ENCODE measurements at regions of chr16 and their contacts with region 1.

Region 1: GRCh38 chr16:3282730-3283524 is at the start of gene ZNF263:
- DNase-seq: peak; percentile 89
- ATAC-seq: peak; percentile 87
- H3K4me3 Mint-ChIP-seq: peak within 1 kb of the TSS; percentile 95
- H3K27ac Mint-ChIP-seq: peak within 1 kb of the TSS; percentile 99
- H3K4me1 Mint-ChIP-seq: peaks cover 40% of the 10 kb centered on the region
- H3K27me3 Mint-ChIP-seq: no peaks in the 10 kb centered on the region
- CTCF ChIP-seq: no peak
- total RNA-seq, gene ZNF263: 42.7 and 42.9 TPM in 2 replicates

Region 2: DNA sequence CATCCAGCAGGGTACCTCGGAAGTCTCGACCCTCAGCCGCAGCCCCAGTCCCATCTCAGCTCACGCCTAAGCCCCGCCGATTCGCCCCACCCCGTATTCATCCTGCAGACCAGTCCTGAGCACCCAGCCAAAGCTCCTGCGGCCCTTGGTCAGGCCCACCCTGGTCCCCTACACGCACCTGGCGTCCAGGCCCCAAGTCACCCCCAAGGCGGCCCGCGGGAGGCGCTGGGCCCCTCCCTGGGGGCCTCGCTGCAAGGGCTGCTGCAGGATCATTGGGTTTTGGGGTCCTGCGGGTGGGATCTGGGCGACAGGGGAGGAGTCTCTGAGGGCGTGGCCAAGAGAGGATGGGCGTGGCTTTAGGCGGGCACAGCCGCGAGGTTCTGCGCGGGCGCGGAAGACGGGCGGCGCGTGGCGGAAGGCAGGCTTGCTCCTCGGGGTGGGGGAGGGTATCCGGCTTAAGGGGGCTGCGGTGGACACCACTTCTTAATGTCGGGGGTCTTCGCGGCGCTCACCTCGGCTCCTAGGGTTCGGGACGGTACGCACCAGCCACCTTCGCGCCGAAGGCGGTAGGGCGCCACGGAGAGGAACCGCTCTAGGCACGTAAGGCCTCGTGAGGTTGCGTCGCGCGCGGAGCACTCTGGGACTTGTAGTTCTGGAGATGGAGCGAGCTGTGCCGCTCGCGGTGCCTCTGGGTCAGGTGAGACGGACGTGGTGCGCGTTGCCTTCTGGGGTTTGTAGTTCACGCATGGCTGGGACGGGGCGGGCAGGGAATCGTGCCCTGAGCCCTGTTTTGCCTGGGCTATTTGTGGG is 259.1 kb before region 1 on chr16 and contains the starts of genes HCFC1R1 and THOC6:
- CTCF ChIA-PET with region 1: no interaction called
- POLR2A ChIA-PET with region 1: interaction called, 8 read pairs
- intact Hi-C with region 1: loop called (anchors 1 kb)
- DNase-seq: peak; percentile 93
- ATAC-seq: peak; percentile 76
- H3K4me3 Mint-ChIP-seq: peak within 1 kb of the TSS; percentile 92
- H3K27ac Mint-ChIP-seq: peak within 1 kb of the TSS; percentile 99
- H3K4me1 Mint-ChIP-seq: peaks cover 45% of the 10 kb centered on the region
- H3K27me3 Mint-ChIP-seq: peaks cover 1% of the 10 kb centered on the region
- CTCF ChIP-seq: no peak
- total RNA-seq, gene HCFC1R1: 17.7 and 20.4 TPM in 2 replicates
- total RNA-seq, gene THOC6: 45.8 and 47.1 TPM in 2 replicates

Region 3: GRCh38 chr16:3234543-3235541 is 48.1 kb before region 1 on chr16 and contains the start of gene ZNF200:
- CTCF ChIA-PET with region 1: no interaction called
- POLR2A ChIA-PET with region 1: interaction called, 22 read pairs
- intact Hi-C with region 1: loop called (anchors 1 kb)
- DNase-seq: peak; percentile 88
- ATAC-seq: peak; percentile 91
- H3K4me3 Mint-ChIP-seq: peak within 1 kb of the TSS; percentile 94
- H3K27ac Mint-ChIP-seq: peak within 1 kb of the TSS; percentile 96
- H3K4me1 Mint-ChIP-seq: peaks cover 24% of the 10 kb centered on the region
- H3K27me3 Mint-ChIP-seq: no peaks in the 10 kb centered on the region
- CTCF ChIP-seq: no peak
- total RNA-seq, gene ZNF200: 13.6 and 15.1 TPM in 2 replicates

Region 4: GRCh38 chr16:3305109-3306068 is 22.5 kb after region 1 on chr16 and contains the starts of genes TIGD7 and ZNF75A:
- CTCF ChIA-PET with region 1: no interaction called
- POLR2A ChIA-PET with region 1: interaction called, 57 read pairs
- intact Hi-C with region 1: loop called (anchors 1 kb)
- DNase-seq: peak; percentile 83
- ATAC-seq: peak; percentile 91
- H3K4me3 Mint-ChIP-seq: peak within 1 kb of the TSS; percentile 88
- H3K27ac Mint-ChIP-seq: peak within 1 kb of the TSS; percentile 88
- H3K4me1 Mint-ChIP-seq: peaks cover 26% of the 10 kb centered on the region
- H3K27me3 Mint-ChIP-seq: no peaks in the 10 kb centered on the region
- CTCF ChIP-seq: no peak
- total RNA-seq, gene TIGD7: 6.7 and 11.0 TPM in 2 replicates
- total RNA-seq, gene ZNF75A: 84.0 and 97.9 TPM in 2 replicates

Region 5: DNA sequence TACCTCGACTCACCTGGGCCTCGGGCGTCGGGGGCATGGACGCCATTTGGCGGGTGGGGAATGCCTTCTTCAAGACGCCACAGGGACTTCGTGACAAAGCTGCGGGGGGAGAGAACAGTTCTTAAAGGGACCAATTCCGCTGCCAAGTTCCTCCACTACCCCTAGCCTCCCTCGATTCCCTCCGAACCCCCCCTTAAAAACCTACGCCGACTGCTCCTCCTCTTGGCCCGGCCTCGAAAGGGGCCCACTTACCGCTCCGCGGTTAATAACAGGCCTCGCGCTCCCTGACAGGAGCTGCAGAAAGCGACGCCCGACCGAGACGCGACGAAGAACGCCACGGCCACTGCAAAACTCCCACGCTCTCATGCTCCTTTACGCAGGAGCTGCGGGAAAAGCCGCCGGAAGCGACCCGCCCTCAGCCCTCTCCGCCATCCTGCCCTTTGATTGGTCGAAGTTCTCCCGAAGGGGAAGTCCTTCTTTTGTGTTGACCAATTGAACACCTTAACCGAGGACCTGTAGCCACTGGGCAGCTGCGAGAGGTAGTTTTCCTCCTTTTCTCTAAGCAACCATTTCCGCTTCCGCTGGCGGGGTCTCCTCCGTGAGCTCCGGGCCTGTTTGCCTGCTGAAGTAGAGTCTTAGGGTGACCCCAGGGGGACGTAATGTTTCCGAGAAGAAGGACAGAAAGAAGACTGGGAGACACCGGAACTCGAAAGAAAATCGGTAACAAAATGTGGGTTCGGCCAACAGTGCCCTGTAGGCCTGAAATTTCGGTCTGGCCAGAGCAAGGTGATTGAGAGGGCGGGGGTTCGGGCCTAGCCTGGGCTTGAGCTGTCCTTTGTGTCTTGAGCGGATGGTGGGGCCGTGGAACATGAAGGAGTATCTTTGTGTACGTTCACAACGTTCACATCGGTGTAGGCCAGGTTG is 160.4 kb after region 1 on chr16 and contains the starts of genes NAA60 and ZNF597:
- CTCF ChIA-PET with region 1: no interaction called
- POLR2A ChIA-PET with region 1: interaction called, 7 read pairs
- intact Hi-C with region 1: loop called (anchors 2 kb)
- DNase-seq: peak; percentile 52
- ATAC-seq: peak; percentile 96
- H3K4me3 Mint-ChIP-seq: peak within 1 kb of the TSS; percentile 98
- H3K27ac Mint-ChIP-seq: peak within 1 kb of the TSS; percentile 95
- H3K4me1 Mint-ChIP-seq: peaks cover 20% of the 10 kb centered on the region
- H3K27me3 Mint-ChIP-seq: peaks cover 2% of the 10 kb centered on the region
- CTCF ChIP-seq: no peak
- total RNA-seq, gene NAA60: 44.1 and 48.0 TPM in 2 replicates
- total RNA-seq, gene ZNF597: 3.6 and 4.2 TPM in 2 replicates

Region 6: DNA sequence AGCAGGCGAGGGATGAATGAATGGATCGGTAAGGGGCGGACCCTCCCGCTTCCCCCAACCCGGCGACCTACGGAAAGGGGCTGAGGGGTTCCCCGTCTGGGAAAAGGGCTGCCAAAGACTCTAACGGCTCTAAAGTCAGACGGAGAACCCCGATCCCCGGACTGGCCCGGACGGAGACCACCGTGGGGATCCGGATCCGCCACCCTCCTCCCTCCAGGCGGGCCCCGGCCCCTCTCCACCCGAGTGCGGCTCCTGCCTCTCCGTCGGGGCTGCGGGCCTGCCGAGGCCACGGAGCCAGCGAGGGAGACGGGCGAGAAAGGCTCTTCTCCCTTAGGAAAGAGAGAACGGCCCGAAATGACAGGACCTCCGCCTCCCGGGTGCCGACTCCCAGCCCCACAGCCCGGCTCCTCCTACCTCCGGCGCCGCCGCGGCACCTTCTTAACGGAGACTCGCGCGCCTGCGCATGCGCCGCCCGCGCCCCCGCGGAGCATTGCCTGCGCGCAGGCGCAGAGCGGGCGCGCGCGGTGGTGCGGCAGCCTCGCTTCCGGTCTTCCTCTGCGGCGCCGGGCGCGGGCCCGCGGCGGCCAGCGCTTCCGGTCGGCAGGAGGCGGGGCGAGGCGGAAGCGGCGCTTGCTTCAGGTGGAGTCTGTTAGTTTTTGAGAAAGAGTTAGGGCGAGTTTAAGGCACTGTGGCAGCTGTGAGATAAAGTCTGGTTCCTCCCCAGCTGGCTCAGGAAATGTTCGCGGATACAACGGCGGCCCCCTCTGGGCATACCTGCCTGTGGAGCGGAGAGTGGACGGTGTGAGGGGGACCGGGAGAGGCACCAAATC is 328.4 kb after region 1 on chr16 and contains the start of gene SLX4:
- CTCF ChIA-PET with region 1: no interaction called
- POLR2A ChIA-PET with region 1: interaction called, 3 read pairs
- intact Hi-C with region 1: loop called (anchors 1 kb)
- DNase-seq: peak; percentile 95
- ATAC-seq: peak; percentile 85
- H3K4me3 Mint-ChIP-seq: peak within 1 kb of the TSS; percentile 100
- H3K27ac Mint-ChIP-seq: peak within 1 kb of the TSS; percentile 96
- H3K4me1 Mint-ChIP-seq: peaks cover 60% of the 10 kb centered on the region
- H3K27me3 Mint-ChIP-seq: no peaks in the 10 kb centered on the region
- CTCF ChIP-seq: no peak
- total RNA-seq, gene SLX4: 11.4 and 13.0 TPM in 2 replicates